ENCODE measurements at regions of chr3 and their contacts with region 1.

Region 1: DNA sequence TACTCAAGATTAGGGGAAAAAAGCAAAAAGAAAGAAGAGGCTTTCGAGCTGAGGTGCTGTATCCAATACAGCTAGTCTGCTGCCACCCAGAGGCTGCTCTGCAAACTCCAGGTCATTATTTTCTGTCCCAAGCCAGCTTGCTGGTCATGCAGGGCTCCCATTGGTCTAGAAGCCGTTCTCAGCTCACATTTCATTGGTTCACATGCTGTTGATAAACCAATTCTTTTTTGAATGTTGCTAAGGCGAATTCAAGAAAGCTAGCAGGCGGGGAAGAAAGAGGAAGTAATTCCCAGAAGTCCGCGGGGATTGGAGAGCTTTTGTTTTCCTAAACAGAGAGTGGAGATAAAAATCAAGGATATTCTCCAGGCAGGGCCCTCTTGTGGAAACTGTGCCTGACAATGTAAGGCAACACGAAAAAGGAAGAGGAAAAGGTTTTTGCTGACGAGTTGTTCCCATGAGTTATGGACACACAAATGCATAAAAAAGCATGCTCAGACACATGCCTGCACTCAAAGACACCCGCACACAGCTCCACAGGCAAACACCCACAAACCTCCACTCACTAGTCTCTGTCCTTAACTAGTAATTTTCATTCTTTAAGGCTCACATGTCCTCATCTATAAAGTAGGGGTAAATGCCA is 33.4 kb downstream of the FSTL1 start:
- DNase-seq: peak; percentile 81 to 98 (median 94)

Region 2: GRCh38 chr3:119891944-119892721 is 525.3 kb before region 1 on chr3:
- intact Hi-C with region 1: loop called (anchors 5 kb)
- DNase-seq: peak in 25 of 42 donors; percentile 4 to 78 (median 34)

Region 3: DNA sequence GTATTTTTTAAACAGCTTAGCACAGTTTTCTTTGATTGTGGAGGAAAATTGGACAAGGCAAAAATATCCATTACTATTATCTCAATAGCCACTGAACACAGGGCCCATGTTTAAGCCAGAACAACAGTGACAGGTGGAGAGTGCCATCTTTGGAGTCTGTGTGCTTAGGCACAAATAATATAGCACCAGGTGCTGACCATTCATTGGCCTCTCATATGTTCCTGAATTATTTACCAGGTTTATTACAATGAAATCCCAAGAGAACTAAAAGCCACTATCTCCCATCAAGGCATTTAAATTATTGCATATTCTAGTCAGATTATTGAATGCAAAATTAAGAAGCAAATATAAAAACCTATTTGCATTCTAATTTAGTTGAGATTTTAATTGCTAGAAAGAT is 172.0 kb before region 1 on chr3:
- intact Hi-C with region 1: loop called (anchors 2 kb)
- DNase-seq: no peak

Region 4: DNA sequence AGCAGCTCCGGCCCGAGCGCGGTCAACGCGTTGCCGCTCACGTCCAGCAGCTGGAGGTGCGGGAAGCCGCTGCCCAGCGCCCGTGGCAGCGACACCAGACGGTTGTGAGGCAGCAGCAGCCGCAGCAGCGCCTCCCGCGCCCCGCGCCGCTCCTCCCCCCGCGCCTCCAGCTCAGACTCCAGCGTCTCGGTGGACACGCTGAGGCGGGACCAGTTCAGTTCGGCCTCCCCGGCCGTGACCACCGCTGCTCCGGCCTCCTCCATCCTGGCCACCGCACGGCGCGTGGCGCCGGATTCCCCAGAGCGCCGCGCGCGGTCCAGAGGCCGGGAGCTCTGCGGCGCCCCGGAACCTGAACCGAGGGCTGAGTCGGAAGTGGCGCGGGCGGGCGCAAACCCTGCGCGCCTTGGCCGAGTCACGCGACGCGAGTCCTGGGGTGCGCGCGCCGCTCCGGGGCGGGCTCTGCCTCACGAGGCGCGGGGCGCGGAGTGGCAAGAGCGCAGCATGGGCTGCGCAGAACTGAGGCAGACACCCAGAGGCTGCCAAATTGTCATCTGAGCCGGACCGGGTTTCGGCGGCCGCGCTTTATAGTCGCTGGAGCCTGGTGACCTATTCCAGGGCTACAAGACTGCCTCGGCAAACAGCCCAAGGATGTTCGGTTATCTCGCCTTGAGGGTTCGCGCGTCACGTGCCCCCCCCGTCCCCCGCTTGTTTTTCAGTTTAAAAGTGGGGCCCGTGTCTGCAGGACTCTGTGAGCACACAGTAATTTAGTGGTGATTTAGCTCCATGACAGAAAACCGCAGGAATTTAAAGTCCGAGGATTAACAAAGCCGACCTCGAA is 68.2 kb before region 1 on chr3 and contains the start of gene LRRC58:
- intact Hi-C with region 1: loop called (anchors 5 kb)
- DNase-seq: peak; percentile 61 to 93 (median 86)

Region 5: DNA sequence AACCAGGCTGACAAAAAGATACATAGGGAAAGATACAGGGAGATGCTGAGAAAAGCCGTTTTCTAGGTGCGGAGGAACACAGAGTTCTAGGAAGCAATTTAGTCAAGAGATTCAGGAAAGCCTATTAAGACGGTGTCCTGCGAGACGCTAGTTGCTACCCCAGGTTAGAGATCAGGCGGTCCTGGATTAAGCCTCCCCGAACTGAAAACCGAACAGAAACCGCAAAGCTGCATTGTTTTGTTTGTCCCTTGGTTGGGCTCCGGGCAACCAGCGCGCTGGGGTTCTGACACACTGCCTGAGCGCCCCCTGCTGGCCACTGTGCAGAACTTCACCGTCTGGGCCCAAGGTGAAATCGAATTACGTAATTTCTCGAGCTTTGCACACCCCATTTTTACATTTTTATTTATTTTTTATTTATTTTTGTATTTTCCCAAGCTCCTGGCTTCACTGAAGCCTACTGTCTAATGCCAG is 141.4 kb after region 1 on chr3:
- intact Hi-C with region 1: loop called (anchors 2 kb)
- DNase-seq: peak; percentile 78 to 95 (median 88)

Measured in head of caudate nucleus (tissue), 42 donors.